PC-9 (cell line): ENCODE measurements at regions of chr22 and their contacts with region 1.

Region 1: GRCh38 chr22:39110631-39111561 is 13.9 kb downstream of the APOBEC3H start:
- DNase-seq: peak; percentile 34 to 92
- H3K4me3 ChIP-seq: no peak overlapping the region
- H3K27ac ChIP-seq: peak overlapping the region; percentile 47
- H3K4me1 ChIP-seq: peaks cover 21% of the 10 kb centered on the region
- H3K27me3 ChIP-seq: no peaks in the 10 kb centered on the region
- CTCF ChIP-seq: no peak

Region 2: DNA sequence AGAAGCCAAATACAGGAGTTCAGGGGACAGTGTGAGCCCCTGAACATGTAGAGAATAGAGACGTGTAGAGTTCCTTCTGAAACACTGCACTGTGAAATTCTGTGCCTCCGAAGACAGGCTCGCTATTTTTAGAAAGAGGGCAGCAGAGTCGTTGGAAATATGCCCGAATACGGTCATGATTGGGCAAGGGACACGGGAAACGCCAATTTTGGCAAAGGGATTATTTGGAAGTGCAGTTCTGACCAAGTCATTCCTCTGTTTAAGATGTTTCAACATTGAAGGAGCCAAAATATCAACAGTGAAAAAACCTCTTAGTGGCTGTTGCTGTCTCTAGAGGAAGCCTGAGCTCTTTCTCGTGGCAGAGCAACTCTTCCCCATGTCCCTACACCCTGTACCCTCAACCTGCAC is 229.4 kb before region 1 on chr22:
- CTCF ChIA-PET with region 1: no interaction called
- POLR2A ChIA-PET with region 1: interaction called, 24 read pairs
- intact Hi-C with region 1: no loop called
- DNase-seq: no peak
- H3K4me3 ChIP-seq: no peak overlapping the region
- H3K27ac ChIP-seq: no peak overlapping the region
- H3K4me1 ChIP-seq: peaks cover 26% of the 10 kb centered on the region
- H3K27me3 ChIP-seq: no peaks in the 10 kb centered on the region
- CTCF ChIP-seq: no peak

Region 3: DNA sequence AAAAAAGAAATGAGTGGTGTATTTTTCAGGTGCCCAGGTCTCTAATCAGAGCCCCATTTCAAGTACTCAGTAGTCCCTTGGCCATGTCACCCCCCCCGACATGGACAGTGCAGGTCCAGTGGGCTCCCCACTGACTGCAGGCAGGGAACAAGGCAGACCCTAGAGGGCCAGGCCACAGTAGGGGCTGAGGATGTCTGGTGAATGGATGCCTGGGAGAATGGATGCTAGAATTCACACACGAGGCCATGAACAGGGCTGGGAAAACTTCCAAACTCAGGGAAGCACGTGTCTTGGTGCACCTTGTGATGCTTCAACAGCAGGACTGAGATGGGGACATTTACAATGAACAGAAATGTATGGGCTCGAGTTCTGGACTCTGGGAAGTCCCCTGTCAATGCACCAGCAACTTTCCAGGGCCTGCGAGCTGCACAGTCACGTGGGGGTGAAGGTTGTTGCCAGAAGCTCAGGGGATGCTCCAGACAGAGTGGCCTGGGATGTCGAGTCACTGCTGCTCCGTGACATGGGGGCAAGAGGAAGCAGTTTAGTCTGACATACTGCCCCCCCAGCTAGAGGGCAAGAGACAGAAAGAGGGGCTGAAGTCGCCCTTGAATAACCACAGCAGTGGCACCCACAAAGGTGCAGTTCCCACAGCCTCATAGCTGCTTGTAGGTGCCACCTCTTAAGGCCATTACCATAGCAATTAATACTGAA is 30.7 kb before region 1 on chr22:
- CTCF ChIA-PET with region 1: no interaction called
- POLR2A ChIA-PET with region 1: no interaction called
- intact Hi-C with region 1: no loop called
- DNase-seq: no peak
- H3K4me3 ChIP-seq: no peak overlapping the region
- H3K27ac ChIP-seq: no peak overlapping the region
- H3K4me1 ChIP-seq: peaks cover 13% of the 10 kb centered on the region
- H3K27me3 ChIP-seq: no peaks in the 10 kb centered on the region
- CTCF ChIP-seq: no peak

Region 4: DNA sequence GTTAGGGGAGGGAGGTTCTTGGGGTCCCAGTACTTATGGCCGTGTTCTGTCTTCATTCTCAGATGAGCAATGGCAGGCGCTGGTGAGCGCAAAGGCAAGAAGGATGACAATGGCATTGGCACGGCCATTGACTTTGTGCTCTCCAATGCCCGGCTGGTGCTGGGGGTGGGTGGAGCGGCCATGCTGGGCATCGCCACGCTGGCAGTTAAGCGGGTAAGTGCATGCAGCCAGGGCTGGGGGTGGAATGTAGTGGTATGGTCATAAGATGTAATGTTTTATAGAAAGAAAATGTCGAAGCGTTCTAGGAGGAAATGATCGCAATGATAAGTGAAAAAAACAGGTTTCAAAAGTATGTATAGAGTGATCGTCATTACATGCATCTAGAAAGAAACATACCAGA is 400.3 kb after region 1 on chr22:
- CTCF ChIA-PET with region 1: no interaction called
- POLR2A ChIA-PET with region 1: interaction called, 24 read pairs
- intact Hi-C with region 1: no loop called
- DNase-seq: no peak
- H3K4me3 ChIP-seq: no peak overlapping the region
- H3K27ac ChIP-seq: no peak overlapping the region
- H3K4me1 ChIP-seq: no peaks in the 10 kb centered on the region
- H3K27me3 ChIP-seq: no peaks in the 10 kb centered on the region
- CTCF ChIP-seq: no peak